OCI-LY7 (cell line): ENCODE measurements at regions of chr5 and their contacts with region 1.

Region 1: DNA sequence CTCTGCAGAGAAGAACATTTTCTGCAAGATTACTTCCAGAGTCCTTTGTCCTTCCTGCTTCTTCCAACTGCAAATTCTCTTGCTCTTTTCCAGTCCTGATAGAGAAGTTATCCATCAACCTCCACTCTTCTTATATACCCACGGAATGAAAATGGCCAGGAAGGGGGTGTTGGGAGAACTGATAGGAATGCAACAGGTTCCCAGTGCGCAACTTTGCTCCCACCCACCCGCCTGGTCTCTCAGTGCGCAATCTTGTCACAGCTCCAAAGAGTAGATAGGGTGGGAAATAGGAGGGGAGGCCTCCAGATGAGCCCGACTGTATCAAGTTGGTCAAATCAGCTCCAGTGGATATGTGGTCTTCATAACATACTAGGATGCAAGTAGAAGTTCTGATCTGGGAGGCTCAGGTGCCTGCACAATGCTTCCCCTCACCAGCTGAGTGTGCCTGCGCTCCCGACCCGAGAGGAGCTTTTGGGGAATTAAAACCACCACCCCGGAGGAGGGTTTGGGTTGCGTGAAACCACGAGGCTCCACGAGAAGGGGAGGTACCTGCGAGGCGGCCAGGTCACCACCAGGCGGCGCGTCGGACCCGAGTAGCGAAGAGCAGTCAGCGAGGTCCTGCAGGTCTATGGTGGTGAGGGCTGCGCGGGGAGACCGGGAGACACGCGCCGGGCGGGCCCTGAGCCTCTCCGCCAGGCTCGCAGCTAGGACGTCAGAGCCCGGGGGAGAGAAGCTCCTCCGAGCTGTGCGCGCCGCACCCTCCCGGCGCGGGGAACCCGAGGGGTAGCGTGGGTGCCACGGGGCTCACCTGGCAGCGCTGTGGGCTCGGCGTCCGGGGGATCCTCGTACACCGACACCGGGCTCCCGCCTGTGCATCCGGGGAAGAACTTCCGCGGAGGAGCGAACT is 835 bp downstream of the MCIDAS start:
- DNase-seq: peak; percentile 74
- H3K4me3 ChIP-seq: peak overlapping the region; percentile 66
- H3K27ac ChIP-seq: no peak overlapping the region
- H3K4me1 ChIP-seq: peaks cover 11% of the 10 kb centered on the region
- CTCF ChIP-seq: peak; percentile 80

Region 2: DNA sequence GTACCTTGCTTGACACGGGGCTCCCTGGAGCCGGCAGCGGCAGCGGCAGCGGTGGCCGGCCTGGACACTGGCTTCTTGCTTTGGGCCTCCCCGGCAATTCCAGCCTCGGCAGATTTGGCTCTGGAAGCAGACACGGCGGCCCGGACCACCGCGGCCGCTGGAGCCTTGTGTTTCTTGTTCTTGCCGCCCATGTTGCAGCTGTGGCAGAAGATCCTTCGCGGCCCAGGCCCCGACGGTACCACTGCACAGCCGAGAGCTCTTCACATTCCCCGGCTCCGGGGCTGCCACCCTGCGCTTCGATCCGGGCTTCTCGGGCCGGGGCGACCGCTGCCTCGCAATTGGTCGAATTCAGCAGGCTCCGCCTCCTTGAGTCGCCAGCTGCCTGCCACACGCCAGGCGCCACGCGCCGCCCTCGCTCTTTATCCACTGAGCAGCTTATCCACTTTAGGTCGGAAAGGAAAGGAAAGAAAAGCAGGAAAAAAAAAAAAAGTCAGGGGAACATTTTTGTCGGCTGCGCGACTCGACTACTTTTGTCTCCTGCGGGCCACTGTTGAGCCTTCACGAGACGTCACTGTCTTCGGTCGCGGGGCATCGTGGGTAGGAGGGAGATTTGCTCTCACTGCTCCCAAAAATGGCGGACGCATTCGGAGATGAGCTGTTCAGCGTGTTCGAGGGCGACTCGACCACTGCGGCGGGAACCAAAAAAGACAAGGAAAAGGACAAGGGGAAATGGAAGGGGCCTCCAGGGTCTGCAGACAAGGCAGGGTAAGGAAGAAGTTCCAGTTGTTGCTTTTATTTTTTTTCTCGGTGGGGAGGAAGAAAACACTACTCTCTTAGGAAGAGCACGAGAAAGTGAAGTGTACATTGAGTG is 81.3 kb after region 1 on chr5 and contains the starts of genes DHX29 and MTREX:
- CTCF ChIA-PET with region 1: no interaction called
- POLR2A ChIA-PET with region 1: no interaction called
- intact Hi-C with region 1: loop called (anchors 5 kb)
- DNase-seq: peak; percentile 89
- H3K4me3 ChIP-seq: peak within 1 kb of the TSS; percentile 91
- H3K27ac ChIP-seq: peak within 1 kb of the TSS; percentile 63
- H3K4me1 ChIP-seq: peaks cover 42% of the 10 kb centered on the region
- CTCF ChIP-seq: no peak
- total RNA-seq, gene DHX29: 12.7 and 13.2 TPM in 2 replicates
- total RNA-seq, gene MTREX: 62.7 and 84.7 TPM in 2 replicates